ENCODE measurements at regions of chr2 and their contacts with region 1.

Region 1: DNA sequence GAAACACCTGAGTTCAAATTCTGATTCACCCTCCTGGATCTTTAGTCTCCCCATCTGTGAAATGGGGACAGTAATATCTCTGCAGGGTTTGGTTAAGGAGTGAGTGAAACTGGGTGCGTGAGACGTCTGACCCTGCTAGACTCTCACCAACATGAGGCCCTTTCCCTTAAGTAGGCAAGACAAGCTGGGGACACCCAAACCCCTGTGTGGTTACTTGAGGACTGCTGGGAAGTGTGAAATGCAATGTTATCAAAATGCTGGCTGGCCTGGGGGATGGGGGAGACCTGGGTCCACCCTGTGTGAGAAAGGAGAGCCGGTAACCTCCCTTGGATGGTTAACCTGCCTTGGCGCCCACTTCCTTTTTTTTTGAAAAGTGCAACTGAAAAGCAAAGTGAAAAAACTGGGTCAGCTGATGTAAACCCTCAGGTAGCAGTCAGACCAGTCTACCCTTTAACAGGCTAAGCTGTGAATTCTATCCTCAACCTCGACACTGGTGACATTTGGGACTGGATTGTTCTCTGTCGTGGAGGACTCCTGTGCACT is 82.3 kb downstream of the INPP5D start:
- DNase-seq: peak; percentile 64
- H3K4me3 Mint-ChIP-seq: no peak overlapping the region
- H3K27ac Mint-ChIP-seq: peak overlapping the region; percentile 67
- H3K4me1 Mint-ChIP-seq: peaks cover 31% of the 10 kb centered on the region
- H3K27me3 Mint-ChIP-seq: no peaks in the 10 kb centered on the region

Region 2: DNA sequence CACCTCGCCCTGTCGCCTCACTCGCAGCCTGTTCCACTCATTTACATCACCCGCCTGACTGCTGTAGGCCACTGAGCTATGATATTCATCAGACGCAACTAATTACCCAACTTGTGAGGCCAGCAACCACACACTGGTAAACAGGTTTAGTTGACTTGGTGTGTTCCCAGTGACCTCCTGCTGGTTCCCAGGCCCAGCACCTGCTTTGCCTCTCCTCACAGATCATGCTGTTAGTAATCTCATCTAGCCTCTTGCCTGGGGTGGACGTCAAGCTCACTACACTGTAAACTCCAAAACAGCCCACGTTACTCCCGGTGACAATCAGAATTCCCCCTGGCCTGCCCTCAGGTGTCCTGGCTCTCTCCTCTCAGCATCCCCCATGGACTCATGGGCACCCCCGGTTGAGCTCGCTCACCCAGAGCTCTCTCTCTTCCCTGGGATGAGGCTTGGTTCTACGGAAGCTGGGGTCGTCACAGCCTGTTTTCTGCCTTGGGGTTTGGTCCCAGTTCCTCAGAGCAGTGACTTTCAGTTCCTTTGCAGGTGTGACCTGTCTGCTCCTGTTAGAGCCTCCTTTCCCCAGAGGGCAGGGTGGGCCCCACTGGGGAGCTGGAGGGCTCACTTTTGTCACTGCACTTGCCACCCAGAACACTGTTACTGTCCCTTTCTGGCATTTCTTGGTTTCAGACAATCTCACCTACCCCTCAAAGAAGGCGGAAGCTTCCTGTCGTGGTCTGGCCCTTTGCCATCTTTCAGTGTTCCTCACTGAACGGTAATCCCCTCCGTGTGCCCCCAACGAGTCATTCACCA is 42.0 kb before region 1 on chr2:
- CTCF ChIA-PET with region 1: interaction called, 3 read pairs
- POLR2A ChIA-PET with region 1: no interaction called
- intact Hi-C with region 1: loop called (anchors 1 kb)
- DNase-seq: peak; percentile 87
- H3K4me3 Mint-ChIP-seq: peak overlapping the region; percentile 17
- H3K27ac Mint-ChIP-seq: peak overlapping the region; percentile 68
- H3K4me1 Mint-ChIP-seq: peaks cover 61% of the 10 kb centered on the region
- H3K27me3 Mint-ChIP-seq: no peaks in the 10 kb centered on the region

Region 3: GRCh38 chr2:233165895-233166661 is 23.7 kb after region 1 on chr2:
- CTCF ChIA-PET with region 1: no interaction called
- POLR2A ChIA-PET with region 1: no interaction called
- intact Hi-C with region 1: loop called (anchors 1 kb)
- DNase-seq: peak; percentile 73
- H3K4me3 Mint-ChIP-seq: no peak overlapping the region
- H3K27ac Mint-ChIP-seq: no peak overlapping the region
- H3K4me1 Mint-ChIP-seq: no peaks in the 10 kb centered on the region
- H3K27me3 Mint-ChIP-seq: no peaks in the 10 kb centered on the region